Aorta (tissue), 5 donors: ENCODE measurements at regions of chr3 and their contacts with region 1.

Region 1: GRCh38 chr3:5021116-5022092 is 42.2 kb downstream of the BHLHE40 start:
- DNase-seq: no peak
- ATAC-seq: no peak
- H3K4me3 ChIP-seq: no peak overlapping the region
- H3K27ac ChIP-seq: no peak overlapping the region
- H3K4me1 ChIP-seq: no peaks in the 10 kb centered on the region
- H3K27me3 ChIP-seq: no peaks in the 10 kb centered on the region

Region 2: GRCh38 chr3:4994823-4995499 is 26.4 kb before region 1 on chr3:
- intact Hi-C with region 1: loop called (anchors 2 kb)
- DNase-seq: peak; percentile 93 to 95
- ATAC-seq: peak; percentile 93
- H3K4me3 ChIP-seq: no peak overlapping the region
- H3K27ac ChIP-seq: peak overlapping the region; percentile 44 to 89
- H3K4me1 ChIP-seq: no peaks in the 10 kb centered on the region
- H3K27me3 ChIP-seq: no peaks in the 10 kb centered on the region

Region 3: GRCh38 chr3:5401002-5401401 is 379.6 kb after region 1 on chr3:
- intact Hi-C with region 1: no loop called
- DNase-seq: no peak
- ATAC-seq: peak; percentile 41
- H3K4me3 ChIP-seq: no peak overlapping the region
- H3K27ac ChIP-seq: no peak overlapping the region
- H3K4me1 ChIP-seq: no peaks in the 10 kb centered on the region
- H3K27me3 ChIP-seq: no peaks in the 10 kb centered on the region